AG04449 (cell line): ENCODE measurements at regions of chr5 and their contacts with region 1.

Region 1: DNA sequence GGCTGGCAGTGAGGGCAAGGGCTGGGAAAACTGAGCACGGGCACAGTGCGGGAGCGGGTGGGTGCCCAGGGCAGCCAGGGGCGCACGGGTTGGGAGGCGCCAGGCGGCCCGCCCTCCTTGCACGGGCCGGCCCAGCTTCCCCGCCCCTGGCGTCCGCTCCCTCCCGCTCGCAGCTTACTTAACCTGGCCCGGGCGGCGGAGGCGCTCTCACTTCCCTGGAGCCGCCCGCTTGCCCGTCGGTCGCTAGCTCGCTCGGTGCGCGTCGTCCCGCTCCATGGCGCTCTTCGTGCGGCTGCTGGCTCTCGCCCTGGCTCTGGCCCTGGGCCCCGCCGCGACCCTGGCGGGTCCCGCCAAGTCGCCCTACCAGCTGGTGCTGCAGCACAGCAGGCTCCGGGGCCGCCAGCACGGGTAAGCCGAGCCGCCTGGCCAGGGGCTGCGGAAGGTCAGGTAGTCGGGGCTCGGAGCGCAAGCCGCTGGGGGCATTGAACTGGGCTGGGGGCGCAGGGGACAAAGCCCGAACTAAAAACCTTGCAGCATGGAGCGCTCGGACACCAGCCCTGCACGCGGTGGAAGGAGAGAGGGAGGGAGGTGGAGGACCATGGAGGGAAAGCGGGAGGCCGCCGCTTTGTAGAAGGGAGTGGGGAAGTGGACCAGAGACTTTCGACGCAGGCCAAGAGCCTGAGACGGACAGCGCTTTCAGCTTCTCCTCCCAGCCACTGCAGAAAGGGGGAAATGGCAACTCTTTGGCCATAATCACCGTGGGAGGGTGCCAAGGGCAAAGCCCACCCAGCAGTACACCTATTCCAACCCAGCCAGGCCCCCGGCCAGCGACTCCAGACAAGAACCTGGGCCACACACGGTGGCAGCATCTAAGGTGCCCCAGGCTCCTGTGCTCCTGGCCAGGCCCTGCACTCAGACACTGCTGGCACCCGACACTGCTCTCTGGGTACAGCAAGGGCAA is at the start of gene TGFBI:
- DNase-seq: no peak
- H3K4me3 ChIP-seq: peak within 1 kb of the TSS; percentile 82
- CTCF ChIP-seq: peak; percentile 26

Region 2: DNA sequence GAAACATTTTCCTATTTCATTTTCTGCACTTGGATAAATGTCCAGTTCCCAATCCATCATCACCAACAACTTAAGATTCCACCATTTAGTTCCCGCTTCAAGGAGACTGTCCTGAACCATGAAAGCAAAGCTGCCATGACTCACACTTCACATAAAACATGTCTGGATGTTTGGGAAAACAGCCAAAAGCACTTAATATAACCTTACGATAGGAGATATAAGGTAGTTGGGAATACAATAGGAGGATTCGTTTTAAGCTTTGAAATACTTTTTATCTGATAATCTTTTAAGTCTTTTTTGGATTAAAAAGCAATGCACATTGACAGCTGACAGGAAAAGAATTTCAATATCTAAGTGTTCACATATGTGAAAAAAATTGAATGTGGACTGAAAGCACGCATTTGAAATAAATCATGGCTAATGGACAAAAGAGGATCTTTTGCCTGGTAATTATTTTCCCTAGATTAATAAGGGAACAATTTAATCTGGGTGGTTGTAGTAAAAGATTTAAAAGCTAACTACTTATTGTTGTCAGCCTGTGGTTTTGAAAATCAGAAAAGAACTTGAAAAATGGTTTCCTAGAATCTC is 17.6 kb before region 1 on chr5:
- CTCF ChIA-PET with region 1: interaction called, 3 read pairs
- POLR2A ChIA-PET with region 1: interaction called, 20 read pairs
- DNase-seq: no peak
- H3K4me3 ChIP-seq: no peak overlapping the region
- CTCF ChIP-seq: no peak

Region 3: GRCh38 chr5:136042665-136043121 is 13.6 kb after region 1 on chr5:
- CTCF ChIA-PET with region 1: interaction called, 9 read pairs
- POLR2A ChIA-PET with region 1: interaction called, 10 read pairs
- DNase-seq: no peak
- H3K4me3 ChIP-seq: no peak overlapping the region
- CTCF ChIP-seq: no peak